ENCODE measurements at regions of chr5 and their contacts with region 1.

Region 1: DNA sequence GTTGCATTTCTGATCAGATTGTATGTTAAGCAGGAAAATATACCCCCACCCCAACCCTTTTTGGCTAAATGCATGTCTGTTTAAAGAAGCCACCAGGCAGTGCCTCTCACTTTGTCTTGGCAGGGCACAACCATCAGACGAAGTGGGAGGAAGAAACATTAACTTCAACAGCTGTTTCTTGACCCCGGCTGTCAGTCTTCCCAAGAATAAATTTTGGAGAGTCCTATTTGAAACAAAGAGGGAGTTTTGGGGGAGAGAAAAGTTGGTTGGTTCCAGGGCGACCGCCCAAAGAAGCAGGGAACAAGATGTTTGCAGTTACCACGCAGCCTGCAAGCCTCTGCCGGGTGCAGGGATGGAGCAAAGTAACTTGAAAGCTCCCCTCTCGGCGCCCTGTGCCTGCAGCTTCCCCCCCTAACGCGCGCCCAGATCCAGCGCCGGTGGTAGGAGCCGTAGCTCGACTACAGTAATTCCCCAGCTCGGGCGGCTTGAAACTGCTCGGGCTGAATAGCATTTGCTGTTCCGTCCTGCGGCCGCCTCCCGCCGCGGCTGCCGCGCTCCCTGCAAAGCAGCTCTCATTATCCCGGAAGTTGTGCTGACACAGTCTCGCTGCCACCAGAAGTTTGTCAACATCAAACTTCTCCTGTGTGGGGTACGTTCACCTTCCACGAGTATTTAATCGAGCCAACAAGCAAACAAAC is 100.7 kb upstream of the SSBP2 start:
- DNase-seq: peak; percentile 93
- ATAC-seq: peak; percentile 86
- H3K4me3 Mint-ChIP-seq: peak overlapping the region; percentile 78
- H3K27ac Mint-ChIP-seq: peak overlapping the region; percentile 94
- H3K4me1 Mint-ChIP-seq: peaks cover 42% of the 10 kb centered on the region
- H3K27me3 Mint-ChIP-seq: no peaks in the 10 kb centered on the region

Region 2: DNA sequence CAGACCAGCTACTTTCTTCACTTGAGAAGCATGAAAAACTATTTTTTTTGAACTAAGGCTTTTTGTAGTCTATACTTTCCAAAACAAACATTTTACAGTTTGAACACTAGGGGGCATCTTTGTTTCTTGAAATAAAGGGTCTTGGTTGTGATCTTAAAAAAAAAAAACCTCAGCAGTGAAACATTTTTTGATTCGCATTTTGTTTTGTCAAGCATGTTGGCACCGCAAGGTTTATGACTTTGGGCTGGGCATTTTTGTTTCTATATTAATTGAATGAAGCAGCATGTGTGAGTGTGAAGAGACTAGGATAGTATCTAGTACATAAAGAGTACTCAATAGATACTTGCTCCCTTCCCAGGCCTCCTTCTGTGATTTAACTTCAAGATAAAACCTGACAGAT is 426.1 kb before region 1 on chr5:
- CTCF ChIA-PET with region 1: interaction called, 6 read pairs
- POLR2A ChIA-PET with region 1: no interaction called
- intact Hi-C with region 1: loop called (anchors 5 to 10 kb)
- DNase-seq: no peak
- ATAC-seq: peak; percentile 70
- H3K4me3 Mint-ChIP-seq: no peak overlapping the region
- H3K27ac Mint-ChIP-seq: no peak overlapping the region
- H3K4me1 Mint-ChIP-seq: peaks cover 30% of the 10 kb centered on the region
- H3K27me3 Mint-ChIP-seq: no peaks in the 10 kb centered on the region

Region 3: DNA sequence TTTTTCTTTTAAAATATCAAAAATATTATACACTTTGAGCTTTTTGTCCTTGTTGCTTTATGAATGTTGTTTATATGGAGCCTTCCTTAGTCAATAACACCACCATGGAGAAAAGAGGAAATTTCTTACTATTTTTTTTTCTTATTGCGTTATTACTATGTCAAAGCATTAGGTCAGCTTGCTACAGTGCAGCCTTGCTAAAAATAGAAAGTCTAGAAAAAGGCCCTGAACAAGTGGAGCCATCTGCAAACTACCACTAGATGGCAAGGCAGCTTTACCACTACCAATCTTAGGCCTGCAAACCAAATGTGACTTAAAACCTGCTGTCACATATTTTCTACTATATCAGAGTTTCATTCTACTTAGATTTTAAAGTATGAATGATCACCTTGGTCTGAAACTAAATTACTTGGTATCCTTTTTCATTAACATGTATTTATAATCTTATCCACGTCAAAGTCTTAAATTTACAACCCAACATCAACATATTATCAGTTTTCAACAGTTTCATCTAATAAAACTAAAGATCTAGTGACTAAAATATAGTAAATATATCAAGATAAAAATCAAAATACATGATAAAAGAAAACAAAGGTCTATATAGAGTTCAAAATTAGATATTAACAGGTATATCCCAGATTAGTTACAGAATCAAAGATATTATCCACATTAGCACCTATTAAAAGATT is 344.6 kb before region 1 on chr5:
- CTCF ChIA-PET with region 1: interaction called, 3 read pairs
- POLR2A ChIA-PET with region 1: no interaction called
- intact Hi-C with region 1: loop called (anchors 5 kb)
- DNase-seq: peak; percentile 52
- ATAC-seq: peak; percentile 100
- H3K4me3 Mint-ChIP-seq: no peak overlapping the region
- H3K27ac Mint-ChIP-seq: no peak overlapping the region
- H3K4me1 Mint-ChIP-seq: no peaks in the 10 kb centered on the region
- H3K27me3 Mint-ChIP-seq: no peaks in the 10 kb centered on the region

Region 4: GRCh38 chr5:81572201-81572600 is 279.4 kb before region 1 on chr5:
- CTCF ChIA-PET with region 1: no interaction called
- POLR2A ChIA-PET with region 1: no interaction called
- intact Hi-C with region 1: no loop called
- DNase-seq: no peak
- ATAC-seq: no peak
- H3K4me3 Mint-ChIP-seq: no peak overlapping the region
- H3K27ac Mint-ChIP-seq: no peak overlapping the region
- H3K4me1 Mint-ChIP-seq: peaks cover 2% of the 10 kb centered on the region
- H3K27me3 Mint-ChIP-seq: no peaks in the 10 kb centered on the region

Region 5: DNA sequence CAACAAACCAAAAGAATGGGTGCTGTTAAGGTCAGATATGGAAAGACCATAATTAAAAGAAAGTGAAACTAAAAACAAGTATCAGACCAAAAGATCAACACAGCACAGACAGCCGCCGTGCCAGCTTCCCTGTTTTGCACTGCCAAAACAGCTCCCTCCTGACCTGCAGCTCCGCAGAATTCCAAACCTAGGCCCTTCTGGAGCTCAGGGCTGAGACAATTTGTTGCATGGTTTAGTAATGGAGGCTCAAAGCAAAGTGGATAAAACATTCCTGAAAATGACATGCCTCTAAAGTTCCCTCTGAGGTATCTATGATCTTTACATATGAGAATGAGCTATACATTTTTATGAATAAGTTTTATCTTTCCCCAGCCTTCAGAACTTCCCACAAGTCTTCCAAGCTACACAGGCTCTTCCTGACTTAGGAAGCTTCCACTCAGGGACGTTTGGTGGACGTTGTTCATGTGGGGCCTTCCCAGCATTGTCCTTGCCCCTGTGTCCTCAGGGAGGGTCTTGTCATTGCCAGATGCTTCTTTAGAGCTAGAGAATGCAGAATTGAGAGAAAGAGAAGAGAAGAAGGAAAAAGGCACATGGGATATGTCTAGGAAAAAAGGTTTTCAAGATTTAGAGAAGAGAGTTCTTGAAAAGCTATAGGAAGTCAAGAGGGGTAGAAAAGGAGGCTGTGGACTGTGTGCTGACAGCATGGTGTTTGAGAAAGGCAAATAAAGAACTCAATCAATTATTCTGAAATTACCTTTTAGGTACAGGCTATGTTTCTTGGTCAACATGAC is 72.3 kb before region 1 on chr5:
- CTCF ChIA-PET with region 1: interaction called, 4 read pairs
- POLR2A ChIA-PET with region 1: interaction called, 4 read pairs
- intact Hi-C with region 1: loop called in 1 of 2 experiments (anchors 2 kb)
- DNase-seq: peak; percentile 63
- ATAC-seq: peak; percentile 75
- H3K4me3 Mint-ChIP-seq: peak overlapping the region; percentile 70
- H3K27ac Mint-ChIP-seq: peak overlapping the region; percentile 90
- H3K4me1 Mint-ChIP-seq: peaks cover 19% of the 10 kb centered on the region
- H3K27me3 Mint-ChIP-seq: no peaks in the 10 kb centered on the region

Region 6: GRCh38 chr5:81838307-81838906 is 13.2 kb before region 1 on chr5:
- CTCF ChIA-PET with region 1: interaction called, 22 read pairs
- POLR2A ChIA-PET with region 1: no interaction called
- intact Hi-C with region 1: no loop called
- DNase-seq: peak; percentile 35
- ATAC-seq: peak; percentile 79
- H3K4me3 Mint-ChIP-seq: no peak overlapping the region
- H3K27ac Mint-ChIP-seq: no peak overlapping the region
- H3K4me1 Mint-ChIP-seq: peaks cover 7% of the 10 kb centered on the region
- H3K27me3 Mint-ChIP-seq: no peaks in the 10 kb centered on the region

Region 7: DNA sequence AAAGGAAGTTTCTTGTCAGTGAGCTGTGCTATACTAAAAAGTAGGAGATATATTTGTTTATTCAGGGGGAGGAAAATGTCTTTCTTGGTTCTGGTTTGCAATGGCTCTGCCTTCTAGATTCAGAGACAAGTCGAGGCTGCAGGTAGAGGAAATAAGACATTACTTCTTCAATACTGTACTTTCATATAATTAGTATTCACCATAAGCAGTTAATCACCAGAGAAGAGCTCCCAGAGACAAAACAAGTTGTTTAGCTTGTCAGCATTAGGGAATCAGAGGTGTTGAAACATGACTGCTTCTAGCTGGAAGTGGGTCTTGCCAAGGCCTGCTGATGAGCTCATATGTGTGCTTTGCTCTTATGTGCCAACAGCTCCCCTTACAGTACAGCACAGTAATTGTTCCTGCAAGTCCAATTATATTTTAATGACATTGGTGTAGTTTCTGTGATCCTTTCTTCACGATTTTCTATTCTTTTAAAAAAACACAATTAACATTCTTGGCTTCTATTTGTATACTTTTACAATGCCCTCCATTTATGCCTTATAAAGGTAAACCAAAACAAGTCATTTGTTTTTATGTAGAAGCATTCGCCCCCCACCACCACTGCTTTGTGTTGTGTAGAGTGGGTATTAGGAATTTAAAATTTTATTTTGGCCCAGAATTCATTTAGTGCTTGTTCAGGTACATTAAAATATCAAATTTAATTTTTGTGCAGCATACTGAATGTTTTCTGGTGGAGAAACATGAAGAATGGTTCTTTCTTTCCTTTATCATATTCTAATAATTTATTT is 314.3 kb after region 1 on chr5:
- CTCF ChIA-PET with region 1: interaction called, 7 read pairs
- POLR2A ChIA-PET with region 1: no interaction called
- intact Hi-C with region 1: loop called (anchors 5 kb)
- DNase-seq: peak; percentile 53
- ATAC-seq: peak; percentile 99
- H3K4me3 Mint-ChIP-seq: no peak overlapping the region
- H3K27ac Mint-ChIP-seq: no peak overlapping the region
- H3K4me1 Mint-ChIP-seq: peaks cover 14% of the 10 kb centered on the region
- H3K27me3 Mint-ChIP-seq: no peaks in the 10 kb centered on the region

Region 8: GRCh38 chr5:82278095-82278918 is 426.7 kb after region 1 on chr5 and contains the start of gene RPS23:
- CTCF ChIA-PET with region 1: no interaction called
- POLR2A ChIA-PET with region 1: interaction called, 3 read pairs
- intact Hi-C with region 1: loop called in 1 of 2 experiments (anchors 1 kb)
- DNase-seq: peak; percentile 93
- ATAC-seq: peak; percentile 95
- H3K4me3 Mint-ChIP-seq: peak within 1 kb of the TSS; percentile 86
- H3K27ac Mint-ChIP-seq: peak within 1 kb of the TSS; percentile 99
- H3K4me1 Mint-ChIP-seq: peaks cover 46% of the 10 kb centered on the region
- H3K27me3 Mint-ChIP-seq: no peaks in the 10 kb centered on the region
- total RNA-seq, gene RPS23: 2,831 to 3,226 TPM

Measured in activated CD4-positive, alpha-beta T cell treated with anti-CD3 and anti-CD28 coated beads for 36 hours (primary cell).